GM12878 (cell line): ENCODE measurements at regions of chr22 and their contacts with region 1.

Region 1: DNA sequence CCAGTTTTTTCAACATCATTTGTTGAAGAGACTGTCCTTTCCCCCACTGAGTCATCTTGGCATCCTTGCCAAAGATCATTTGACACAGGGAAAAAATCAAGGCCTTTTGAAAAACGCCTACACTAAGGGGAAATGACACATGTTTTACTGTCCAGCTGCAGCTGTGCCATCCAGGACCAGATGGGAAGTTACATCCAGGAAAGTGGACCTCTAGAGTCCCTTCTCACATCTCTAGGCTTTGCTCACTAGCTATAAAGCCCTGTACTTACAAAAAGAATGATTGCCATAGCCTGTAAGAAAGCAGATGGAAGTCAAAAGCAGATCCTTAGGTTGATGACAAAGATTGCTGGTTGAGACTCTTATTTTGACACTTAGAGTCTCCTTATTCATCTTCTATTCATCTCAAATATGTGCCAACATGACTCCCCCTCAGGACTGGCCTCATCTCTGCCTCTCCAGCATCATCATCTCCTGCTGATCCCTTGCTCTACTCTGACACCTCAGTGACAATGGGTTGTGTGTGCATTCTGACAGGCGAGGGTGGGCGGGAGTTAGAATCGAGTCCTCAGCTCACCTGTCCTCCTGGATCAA is 22.8 kb downstream of the OSBP2 start:
- DNase-seq: no peak
- ATAC-seq: no peak
- H3K4me3 ChIP-seq: no peak overlapping the region
- H3K27ac ChIP-seq: no peak overlapping the region
- H3K4me1 ChIP-seq: no peaks in the 10 kb centered on the region
- H3K27me3 ChIP-seq: no peaks in the 10 kb centered on the region
- CTCF ChIP-seq: no peak
- EP300 ChIP-seq: no peak
- POLR2A ChIP-seq: no peak
- RAD21 ChIP-seq: no peak

Region 2: DNA sequence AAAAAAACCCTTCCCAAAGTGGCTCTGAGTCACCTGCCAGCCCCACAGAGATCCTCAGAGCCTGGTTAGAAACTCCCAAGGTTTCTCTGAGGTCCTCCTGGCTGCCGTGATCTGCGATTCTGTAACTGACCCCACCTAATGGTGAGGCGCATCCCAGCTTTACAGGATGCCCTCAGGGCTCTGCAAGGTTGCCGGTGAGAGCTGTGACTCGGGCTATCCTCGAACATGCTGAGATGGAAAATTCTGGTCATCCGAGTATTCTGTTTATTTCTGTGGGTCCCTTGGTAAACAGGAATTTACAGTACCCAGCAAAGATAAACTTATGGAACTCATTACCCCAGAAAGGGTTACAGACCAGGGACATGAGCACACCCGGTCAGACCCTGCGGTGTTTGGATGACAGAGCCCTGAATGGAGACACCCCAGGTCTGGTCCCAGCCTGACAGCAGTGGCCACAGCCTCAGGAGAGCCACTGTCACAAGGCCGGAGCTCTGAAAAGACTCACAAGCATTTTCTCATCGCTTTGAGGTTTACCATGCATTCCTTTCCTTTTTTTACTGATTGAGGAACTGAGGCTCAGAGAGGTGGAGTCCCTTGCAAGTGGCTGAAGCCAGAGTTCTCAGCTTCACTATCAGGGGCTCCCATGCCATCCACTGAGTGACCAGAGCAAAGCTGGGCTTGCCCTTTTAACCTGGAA is 493.1 kb before region 1 on chr22:
- CTCF ChIA-PET with region 1: no interaction called
- POLR2A ChIA-PET with region 1: no interaction called
- RAD21 ChIA-PET with region 1: no interaction called
- SMC1A ChIA-PET with region 1: no interaction called
- in situ Hi-C with region 1: no loop called
- intact Hi-C with region 1: no loop called
- DNase-seq: peak; percentile 27
- ATAC-seq: peak; percentile 67
- H3K4me3 ChIP-seq: no peak overlapping the region
- H3K27ac ChIP-seq: no peak overlapping the region
- H3K4me1 ChIP-seq: peaks cover 25% of the 10 kb centered on the region
- H3K27me3 ChIP-seq: no peaks in the 10 kb centered on the region
- CTCF ChIP-seq: no peak
- EP300 ChIP-seq: no peak
- POLR2A ChIP-seq: no peak
- RAD21 ChIP-seq: no peak

Region 3: GRCh38 chr22:30795786-30796185 is 78.4 kb after region 1 on chr22:
- CTCF ChIA-PET with region 1: no interaction called
- POLR2A ChIA-PET with region 1: interaction called, 11 read pairs
- RAD21 ChIA-PET with region 1: no interaction called
- SMC1A ChIA-PET with region 1: no interaction called
- in situ Hi-C with region 1: no loop called
- intact Hi-C with region 1: no loop called
- DNase-seq: no peak
- ATAC-seq: no peak
- H3K4me3 ChIP-seq: no peak overlapping the region
- H3K27ac ChIP-seq: no peak overlapping the region
- H3K4me1 ChIP-seq: no peaks in the 10 kb centered on the region
- H3K27me3 ChIP-seq: no peaks in the 10 kb centered on the region; a peak in 1 of 4 replicates
- CTCF ChIP-seq: no peak
- EP300 ChIP-seq: no peak
- POLR2A ChIP-seq: no peak
- RAD21 ChIP-seq: no peak

Region 4: GRCh38 chr22:30863081-30863833 is 145.8 kb after region 1 on chr22:
- CTCF ChIA-PET with region 1: no interaction called
- POLR2A ChIA-PET with region 1: no interaction called
- RAD21 ChIA-PET with region 1: no interaction called
- SMC1A ChIA-PET with region 1: no interaction called
- in situ Hi-C with region 1: no loop called
- intact Hi-C with region 1: no loop called
- DNase-seq: no peak
- ATAC-seq: no peak
- H3K4me3 ChIP-seq: no peak overlapping the region
- H3K27ac ChIP-seq: no peak overlapping the region
- H3K4me1 ChIP-seq: no peaks in the 10 kb centered on the region
- H3K27me3 ChIP-seq: no peaks in the 10 kb centered on the region
- CTCF ChIP-seq: no peak
- EP300 ChIP-seq: no peak
- POLR2A ChIP-seq: no peak
- RAD21 ChIP-seq: no peak